Activated CD4-positive, alpha-beta T cell treated with anti-CD3 and anti-CD28 coated beads, Interleukin-2, amount 10 ng/mL, durations not matched to agents 24 days and 14 days (primary cell): ENCODE measurements at regions of chr4 and their contacts with region 1.

Region 1: GRCh38 chr4:1856042-1856788 is at the start of gene LETM1:
- DNase-seq: peak; percentile 99
- H3K4me3 Mint-ChIP-seq: peak within 1 kb of the TSS; percentile 90
- H3K27ac Mint-ChIP-seq: peak within 1 kb of the TSS; percentile 82
- H3K4me1 Mint-ChIP-seq: peaks cover 25% of the 10 kb centered on the region
- H3K27me3 Mint-ChIP-seq: no peaks in the 10 kb centered on the region
- total RNA-seq, gene LETM1: 97.2 and 98.7 TPM in 2 replicates

Region 2: DNA sequence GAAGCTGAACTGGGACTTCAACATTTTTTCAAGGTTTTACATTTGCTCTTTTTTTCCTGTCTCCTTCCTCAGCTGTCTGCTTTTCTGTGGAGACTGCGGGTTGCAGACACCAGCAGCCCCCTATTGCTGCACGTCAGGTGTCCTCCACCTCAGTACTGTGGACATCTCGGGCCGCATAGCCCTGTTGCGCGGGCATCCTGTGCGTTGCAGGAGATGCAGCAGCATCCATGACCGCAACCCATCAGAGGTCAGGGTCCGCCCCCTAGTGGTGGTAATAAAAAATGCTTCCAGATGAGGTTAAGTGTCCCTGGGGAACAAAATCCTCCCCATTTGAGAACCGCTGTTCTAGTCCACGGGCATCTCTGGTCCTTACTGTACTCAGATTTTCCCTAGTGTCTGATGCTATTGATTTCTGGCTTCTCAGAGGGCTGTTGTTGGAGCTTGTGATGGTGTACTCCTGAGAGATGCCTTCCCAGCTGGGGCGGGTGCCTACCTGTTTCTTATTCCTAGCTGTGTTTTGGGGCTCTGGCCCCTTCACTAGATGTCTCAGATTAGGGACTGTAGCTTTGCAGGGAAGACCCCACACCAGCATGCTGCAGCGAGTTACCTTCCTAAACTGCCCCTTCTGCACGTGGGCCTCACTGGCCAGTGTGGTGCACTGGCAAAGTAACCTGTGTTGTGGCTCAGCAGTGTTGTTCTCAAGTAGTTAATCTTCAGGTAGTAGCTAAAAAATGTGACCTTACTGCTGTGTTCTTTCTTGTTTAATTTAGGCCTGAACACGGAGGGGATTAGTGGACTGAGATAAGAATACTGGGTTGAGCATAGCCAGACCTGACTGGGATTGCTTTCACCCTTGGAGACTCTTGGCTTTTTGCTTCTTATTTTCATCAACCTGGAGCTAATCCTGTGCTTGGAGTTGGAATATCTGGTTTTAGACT is 43.2 kb after region 1 on chr4:
- intact Hi-C with region 1: loop called (anchors 1 kb)
- DNase-seq: peak; percentile 94
- H3K4me3 Mint-ChIP-seq: peak overlapping the region; percentile 28
- H3K27ac Mint-ChIP-seq: peak overlapping the region; percentile 86
- H3K4me1 Mint-ChIP-seq: peaks cover 59% of the 10 kb centered on the region
- H3K27me3 Mint-ChIP-seq: no peaks in the 10 kb centered on the region

Region 3: DNA sequence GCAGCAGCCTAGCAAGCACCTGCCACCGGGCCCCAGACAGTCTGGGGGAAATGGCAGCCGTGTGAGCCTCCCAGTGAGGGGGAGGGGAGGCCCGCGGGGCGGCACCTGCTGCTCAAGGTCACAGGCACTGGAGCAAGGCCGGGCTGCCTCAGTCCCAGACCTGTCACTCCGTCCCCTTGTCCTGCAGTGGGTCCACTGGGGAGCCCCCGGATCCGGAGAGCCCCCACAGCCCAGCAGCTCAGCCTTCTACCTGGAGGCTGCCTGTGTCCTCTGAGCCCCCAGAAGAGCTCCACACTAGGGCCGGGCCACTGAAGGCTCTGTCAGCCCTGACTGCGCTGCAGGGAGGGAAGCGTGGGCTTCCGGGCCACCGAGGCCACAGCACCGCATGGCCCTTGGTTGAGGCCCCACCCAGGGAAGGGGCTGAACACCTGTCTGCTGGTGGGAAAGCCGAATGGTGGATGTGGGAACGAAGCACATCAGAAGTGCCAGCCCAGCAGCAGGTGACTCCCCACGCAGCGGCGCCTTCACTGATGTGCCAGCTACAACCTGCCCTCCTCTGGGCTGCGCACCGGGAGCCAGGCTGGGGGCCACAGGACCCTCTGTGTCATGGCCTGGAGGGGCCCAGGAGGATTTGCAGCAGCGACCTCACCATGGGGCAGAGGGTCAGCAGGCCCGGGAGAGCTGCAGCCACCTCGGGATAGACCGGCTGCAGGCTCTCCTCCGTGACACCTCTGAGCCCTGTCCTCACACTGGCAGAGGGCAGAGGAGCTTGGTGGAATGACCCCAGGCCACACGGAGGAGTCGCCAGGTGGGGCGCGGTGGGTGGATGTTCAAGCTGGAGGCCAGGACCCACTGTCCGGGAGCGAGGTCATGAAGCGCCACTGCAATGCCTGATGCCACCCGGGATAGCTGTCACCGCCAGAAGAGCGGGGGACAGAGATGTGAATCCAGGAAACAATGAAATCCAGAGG is 440.7 kb after region 1 on chr4:
- intact Hi-C with region 1: no loop called
- DNase-seq: no peak
- H3K4me3 Mint-ChIP-seq: no peak overlapping the region
- H3K27ac Mint-ChIP-seq: no peak overlapping the region
- H3K4me1 Mint-ChIP-seq: peaks cover 9% of the 10 kb centered on the region
- H3K27me3 Mint-ChIP-seq: peaks cover 15% of the 10 kb centered on the region

Region 4: GRCh38 chr4:2418650-2419571 is 562.7 kb after region 1 on chr4 and contains the start of gene CFAP99:
- intact Hi-C with region 1: loop called (anchors 10 kb)
- DNase-seq: peak; percentile 98
- H3K4me3 Mint-ChIP-seq: peak within 1 kb of the TSS; percentile 91
- H3K27ac Mint-ChIP-seq: peak within 1 kb of the TSS; percentile 86
- H3K4me1 Mint-ChIP-seq: peaks cover 35% of the 10 kb centered on the region
- H3K27me3 Mint-ChIP-seq: peaks cover 59% of the 10 kb centered on the region
- total RNA-seq, gene CFAP99: not detected in 2 replicates